Activated B cell treated with CpG ODN at 0.5 μM for 24 hours (primary cell): ENCODE measurements at regions of chr12 and their contacts with region 1.

Region 1: GRCh38 chr12:14185427-14186192 is 179.9 kb upstream of the ATF7IP start:
- DNase-seq: peak; percentile 41
- ATAC-seq: peak; percentile 86
- H3K4me3 Mint-ChIP-seq: peak overlapping the region; percentile 69
- H3K27ac Mint-ChIP-seq: peak overlapping the region; percentile 87
- H3K4me1 Mint-ChIP-seq: peaks cover 30% of the 10 kb centered on the region
- H3K27me3 Mint-ChIP-seq: no peaks in the 10 kb centered on the region
- CTCF ChIP-seq: peak; percentile 28

Region 2: DNA sequence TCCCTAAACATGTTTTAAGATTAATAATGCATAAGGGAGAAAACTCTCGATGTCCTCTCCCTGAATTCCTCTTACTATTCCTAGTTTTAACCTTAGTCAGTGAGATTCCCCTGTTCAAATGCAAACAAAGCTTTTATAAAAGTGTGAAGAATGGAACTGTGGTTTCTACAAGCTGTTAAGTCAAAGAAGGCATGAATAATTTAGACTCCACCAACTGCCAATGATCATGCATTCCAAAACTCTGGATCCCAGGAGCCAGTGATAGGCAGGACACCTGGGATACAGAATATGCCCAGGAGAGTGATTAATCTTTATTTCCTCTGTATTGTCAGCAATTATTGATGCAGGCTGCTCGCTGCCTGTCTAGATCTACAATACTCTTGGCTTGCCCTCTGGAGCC is 10.4 kb before region 1 on chr12:
- CTCF ChIA-PET with region 1: interaction called, 29 read pairs
- POLR2A ChIA-PET with region 1: interaction called, 18 read pairs
- intact Hi-C with region 1: loop called (anchors 1 kb)
- DNase-seq: no peak
- ATAC-seq: no peak
- H3K4me3 Mint-ChIP-seq: no peak overlapping the region
- H3K27ac Mint-ChIP-seq: no peak overlapping the region
- H3K4me1 Mint-ChIP-seq: peaks cover 28% of the 10 kb centered on the region
- H3K27me3 Mint-ChIP-seq: no peaks in the 10 kb centered on the region
- CTCF ChIP-seq: no peak

Region 3: DNA sequence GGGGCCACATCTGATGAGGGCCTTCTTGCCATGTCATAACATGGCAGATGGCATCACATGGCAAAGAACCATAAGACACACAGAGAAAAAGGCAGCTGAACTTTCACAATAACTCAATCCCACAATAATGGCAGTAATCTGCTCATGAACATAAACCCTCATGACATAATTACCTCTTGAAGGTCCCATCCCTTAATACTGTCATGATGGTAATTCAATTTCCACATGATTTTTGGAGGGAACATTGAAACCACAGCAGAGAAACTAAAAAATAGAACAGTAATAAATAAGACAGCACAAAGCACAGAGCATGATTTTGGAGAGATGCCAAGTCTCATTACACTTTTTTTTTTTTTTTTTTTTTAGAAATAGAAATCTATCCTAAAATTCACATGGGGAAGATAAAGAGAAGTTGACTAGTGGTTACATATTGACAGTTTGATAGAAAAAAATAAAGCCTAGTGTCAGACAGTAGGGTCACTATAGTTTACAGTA is 118.1 kb after region 1 on chr12:
- CTCF ChIA-PET with region 1: no interaction called
- POLR2A ChIA-PET with region 1: no interaction called
- intact Hi-C with region 1: no loop called
- DNase-seq: no peak
- ATAC-seq: no peak
- H3K4me3 Mint-ChIP-seq: no peak overlapping the region
- H3K27ac Mint-ChIP-seq: no peak overlapping the region
- H3K4me1 Mint-ChIP-seq: peaks cover 21% of the 10 kb centered on the region
- H3K27me3 Mint-ChIP-seq: no peaks in the 10 kb centered on the region
- CTCF ChIP-seq: no peak

Region 4: DNA sequence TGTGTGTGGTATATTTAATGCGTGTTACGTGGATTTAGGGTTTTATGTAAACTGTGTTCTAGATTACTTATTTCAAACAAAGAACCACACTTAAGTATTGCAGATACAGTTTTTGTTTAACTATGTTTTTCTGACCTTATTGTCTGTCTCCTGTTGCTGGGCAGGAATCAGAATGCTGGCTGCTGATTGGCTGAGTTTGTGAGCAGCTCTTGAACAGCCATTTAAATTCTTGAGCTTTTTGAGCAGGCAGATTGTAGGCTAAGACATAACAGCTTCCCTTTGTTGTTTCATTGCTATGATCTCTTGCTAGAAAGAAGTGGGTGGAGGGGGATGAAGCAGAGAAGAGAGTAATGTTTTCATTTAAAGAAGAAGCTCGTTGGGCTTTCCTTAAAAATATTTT is 232.1 kb after region 1 on chr12:
- CTCF ChIA-PET with region 1: interaction called, 5 read pairs
- POLR2A ChIA-PET with region 1: no interaction called
- intact Hi-C with region 1: loop called (anchors 2 kb)
- DNase-seq: no peak
- ATAC-seq: peak; percentile 59
- H3K4me3 Mint-ChIP-seq: peak overlapping the region; percentile 58
- H3K27ac Mint-ChIP-seq: peak overlapping the region; percentile 82
- H3K4me1 Mint-ChIP-seq: peaks cover 55% of the 10 kb centered on the region
- H3K27me3 Mint-ChIP-seq: no peaks in the 10 kb centered on the region
- CTCF ChIP-seq: no peak

Region 5: DNA sequence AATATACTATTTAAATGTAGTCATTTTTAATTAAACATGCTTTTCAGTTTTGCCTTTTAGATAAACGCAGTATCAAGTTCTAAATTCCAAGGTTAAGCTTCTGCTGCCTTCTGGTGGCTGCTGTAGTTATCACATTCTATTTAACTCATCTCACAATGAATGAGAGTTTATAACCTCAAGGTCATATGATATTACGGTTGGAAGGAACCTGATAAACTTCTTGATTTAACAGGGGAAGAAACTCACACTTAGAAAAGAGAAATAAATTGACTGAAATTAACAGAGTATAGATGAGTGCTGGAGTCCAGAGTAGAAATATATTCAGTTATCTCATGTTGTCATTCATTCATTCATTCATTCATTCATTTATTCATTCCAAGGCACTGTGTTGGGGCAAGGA is 478.9 kb after region 1 on chr12:
- CTCF ChIA-PET with region 1: interaction called, 7 read pairs
- POLR2A ChIA-PET with region 1: no interaction called
- intact Hi-C with region 1: loop called (anchors 1 kb)
- DNase-seq: no peak
- ATAC-seq: peak; percentile 85
- H3K4me3 Mint-ChIP-seq: no peak overlapping the region
- H3K27ac Mint-ChIP-seq: no peak overlapping the region
- H3K4me1 Mint-ChIP-seq: peaks cover 14% of the 10 kb centered on the region
- H3K27me3 Mint-ChIP-seq: no peaks in the 10 kb centered on the region
- CTCF ChIP-seq: no peak

Region 6: DNA sequence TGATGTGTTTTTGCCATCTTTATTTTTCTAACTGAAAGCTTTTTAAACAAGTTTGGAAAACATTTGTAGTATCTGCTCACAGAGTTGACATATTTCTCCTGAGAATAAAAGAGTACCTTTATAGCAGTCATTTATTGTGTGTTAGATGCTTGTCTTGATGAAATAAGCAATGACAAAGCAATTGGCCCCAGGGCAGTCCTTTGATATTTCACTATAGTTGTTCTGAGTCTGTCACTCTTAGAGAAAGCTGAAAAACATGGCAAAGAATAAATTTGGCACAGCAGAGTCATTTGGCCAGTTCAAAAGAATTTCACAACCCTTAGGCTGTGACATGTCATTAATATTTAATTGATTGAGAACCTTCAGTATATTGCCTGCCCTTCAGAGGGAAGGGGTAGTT is 1302.9 kb after region 1 on chr12:
- CTCF ChIA-PET with region 1: no interaction called
- POLR2A ChIA-PET with region 1: no interaction called
- intact Hi-C with region 1: no loop called
- DNase-seq: no peak
- ATAC-seq: no peak
- H3K4me3 Mint-ChIP-seq: no peak overlapping the region
- H3K27ac Mint-ChIP-seq: no peak overlapping the region
- H3K4me1 Mint-ChIP-seq: no peaks in the 10 kb centered on the region
- H3K27me3 Mint-ChIP-seq: peaks cover 18% of the 10 kb centered on the region
- CTCF ChIP-seq: no peak